Sigmoid colon (tissue), 7 donors: ENCODE measurements at regions of chr2 and their contacts with region 1.

Region 1: DNA sequence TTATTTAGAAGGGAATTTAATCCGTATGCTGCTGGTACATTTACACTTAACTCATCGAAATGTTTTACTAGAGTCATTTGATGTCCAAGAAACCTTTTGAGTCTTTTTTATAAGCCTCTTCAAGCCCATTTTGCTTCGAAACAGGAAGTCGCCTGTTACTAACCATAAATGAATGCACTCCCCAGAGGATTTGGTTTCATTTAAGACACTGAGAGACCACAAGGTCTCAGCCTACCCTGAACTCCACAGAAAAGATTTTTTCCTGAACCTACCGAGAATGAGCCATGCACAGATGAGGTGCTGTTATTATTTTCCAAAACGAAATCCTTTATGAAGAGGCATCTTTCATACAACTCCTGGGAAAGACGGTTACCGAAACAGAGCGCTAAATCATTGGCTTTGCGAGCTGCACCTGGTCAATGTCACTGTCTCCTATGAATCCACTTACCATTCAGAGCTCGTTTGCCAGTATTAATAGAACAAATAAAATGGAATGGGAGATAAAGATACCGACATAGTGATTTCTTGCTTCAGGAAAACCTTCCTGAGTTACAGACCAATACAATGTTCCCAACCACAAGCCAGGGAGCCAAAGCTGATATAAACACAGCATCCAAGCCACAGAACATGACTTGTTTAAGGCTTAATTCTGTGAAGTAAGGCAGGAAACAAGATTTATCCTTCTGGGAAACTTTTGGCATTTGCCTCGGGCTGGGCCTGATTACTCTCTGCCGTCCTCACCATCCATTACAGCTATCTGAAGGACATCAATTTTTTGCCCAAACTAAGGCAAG is 382.1 kb downstream of the OSR1 start:
- DNase-seq: peak; percentile 75
- H3K4me3 ChIP-seq: peak overlapping the region in 3 of 4 donors; percentile 5 to 23 (median 7)
- H3K27ac ChIP-seq: peak overlapping the region; percentile 67 to 81 (median 77)
- H3K4me1 ChIP-seq: peaks cover 0 to 44% (median 37%) of the 10 kb centered on the region in 4 donors
- H3K27me3 ChIP-seq: no peaks in the 10 kb centered on the region
- CTCF ChIP-seq: no peak
- EP300 ChIP-seq: peak; percentile 0 to 75 (median 58)
- POLR2A ChIP-seq: no peak

Region 2: GRCh38 chr2:18749912-18750526 is 226.3 kb before region 1 on chr2:
- intact Hi-C with region 1: loop called (anchors 2 kb)
- DNase-seq: peak; percentile 77
- H3K4me3 ChIP-seq: no peak overlapping the region
- H3K27ac ChIP-seq: no peak overlapping the region
- H3K4me1 ChIP-seq: peaks cover 0 to 11% (median 5%) of the 10 kb centered on the region in 4 donors
- H3K27me3 ChIP-seq: no peaks in the 10 kb centered on the region
- CTCF ChIP-seq: peak; percentile 53 to 84 (median 72)
- EP300 ChIP-seq: no peak
- POLR2A ChIP-seq: no peak

Region 3: DNA sequence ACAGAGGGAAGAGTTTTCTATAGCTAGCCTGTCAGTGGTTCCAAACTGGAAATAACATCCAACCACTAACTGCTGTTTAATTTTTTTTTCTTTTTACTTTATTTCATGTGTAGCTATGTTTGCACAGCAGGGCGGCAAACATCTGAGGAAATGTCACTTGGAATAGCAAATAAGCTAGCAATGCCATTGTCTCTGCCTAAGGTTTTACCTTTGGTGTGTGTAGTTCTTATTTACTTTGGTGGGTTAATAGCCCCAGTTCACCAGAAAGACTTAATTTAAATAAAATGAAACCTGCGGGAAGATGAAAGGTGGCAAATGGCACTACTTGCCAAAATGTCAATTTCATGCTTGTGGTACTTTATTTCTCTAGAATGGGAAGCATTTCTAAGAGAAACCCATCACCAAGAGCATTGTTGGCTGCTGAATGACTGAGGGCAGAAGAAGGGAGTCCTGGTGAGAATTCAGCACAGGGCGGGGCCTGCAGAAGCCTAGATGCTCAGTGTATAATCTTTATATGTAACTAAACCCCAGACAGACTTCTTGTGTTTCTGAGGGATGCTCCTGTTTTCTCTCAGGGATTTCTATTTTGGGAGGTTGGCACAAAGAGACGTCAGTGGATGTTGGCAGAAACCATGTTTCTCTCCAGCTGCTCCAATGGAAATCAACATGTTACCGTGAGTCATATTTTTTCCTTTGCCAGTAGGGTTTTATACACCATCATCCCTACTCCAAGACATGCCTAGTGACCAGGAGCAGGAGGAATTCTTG is 86.6 kb before region 1 on chr2:
- intact Hi-C with region 1: loop called (anchors 1 kb)
- DNase-seq: peak; percentile 70
- H3K4me3 ChIP-seq: no peak overlapping the region
- H3K27ac ChIP-seq: peak overlapping the region; percentile 16 to 82 (median 76)
- H3K4me1 ChIP-seq: peaks cover 2 to 21% (median 18%) of the 10 kb centered on the region in 4 donors
- H3K27me3 ChIP-seq: no peaks in the 10 kb centered on the region
- CTCF ChIP-seq: no peak
- EP300 ChIP-seq: peak; percentile 74 to 91 (median 78)
- POLR2A ChIP-seq: no peak

Region 4: DNA sequence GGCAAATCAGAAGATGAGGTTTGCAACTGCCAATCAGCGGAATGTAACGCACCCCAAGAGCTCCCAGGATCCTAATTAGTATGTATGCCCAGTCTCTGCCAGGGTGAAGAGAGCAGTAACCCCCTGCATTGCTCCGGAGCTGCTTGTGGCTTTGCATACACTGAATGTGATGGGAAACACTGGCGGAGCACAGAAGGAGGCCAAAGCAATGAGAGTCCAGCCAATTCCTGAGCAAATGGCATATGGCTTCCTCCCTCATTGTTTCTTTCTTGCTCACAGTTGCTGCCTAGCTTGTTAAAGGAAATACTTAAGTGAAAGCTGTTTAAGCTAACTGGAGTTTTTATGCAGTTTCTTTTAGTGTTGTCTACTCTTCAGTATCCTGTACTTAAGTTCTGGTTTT is 43.5 kb before region 1 on chr2:
- intact Hi-C with region 1: no loop called
- DNase-seq: no peak
- H3K4me3 ChIP-seq: no peak overlapping the region
- H3K27ac ChIP-seq: no peak overlapping the region
- H3K4me1 ChIP-seq: peaks cover 0 to 18% (median 18%) of the 10 kb centered on the region in 4 donors
- H3K27me3 ChIP-seq: no peaks in the 10 kb centered on the region
- CTCF ChIP-seq: no peak
- EP300 ChIP-seq: no peak
- POLR2A ChIP-seq: no peak

Region 5: GRCh38 chr2:19046986-19047780 is 70.8 kb after region 1 on chr2:
- intact Hi-C with region 1: no loop called
- DNase-seq: no peak
- H3K4me3 ChIP-seq: no peak overlapping the region
- H3K27ac ChIP-seq: peak overlapping the region in 1 of 4 donors; percentile 33
- H3K4me1 ChIP-seq: no peaks in the 10 kb centered on the region
- H3K27me3 ChIP-seq: no peaks in the 10 kb centered on the region
- CTCF ChIP-seq: no peak
- EP300 ChIP-seq: no peak
- POLR2A ChIP-seq: no peak

Region 6: GRCh38 chr2:19347619-19348562 is 371.5 kb after region 1 on chr2:
- intact Hi-C with region 1: loop called (anchors 5 kb)
- DNase-seq: peak; percentile 99
- H3K4me3 ChIP-seq: peak overlapping the region; percentile 62 to 92 (median 78)
- H3K27ac ChIP-seq: peak overlapping the region; percentile 86 to 96 (median 93)
- H3K4me1 ChIP-seq: peaks cover 0 to 27% (median 25%) of the 10 kb centered on the region in 4 donors
- H3K27me3 ChIP-seq: peaks cover 0 to 21% (median 0%) of the 10 kb centered on the region in 3 donors
- CTCF ChIP-seq: no peak
- EP300 ChIP-seq: peak in 1 of 4 donors; percentile 75
- POLR2A ChIP-seq: peak; percentile 97

Region 7: DNA sequence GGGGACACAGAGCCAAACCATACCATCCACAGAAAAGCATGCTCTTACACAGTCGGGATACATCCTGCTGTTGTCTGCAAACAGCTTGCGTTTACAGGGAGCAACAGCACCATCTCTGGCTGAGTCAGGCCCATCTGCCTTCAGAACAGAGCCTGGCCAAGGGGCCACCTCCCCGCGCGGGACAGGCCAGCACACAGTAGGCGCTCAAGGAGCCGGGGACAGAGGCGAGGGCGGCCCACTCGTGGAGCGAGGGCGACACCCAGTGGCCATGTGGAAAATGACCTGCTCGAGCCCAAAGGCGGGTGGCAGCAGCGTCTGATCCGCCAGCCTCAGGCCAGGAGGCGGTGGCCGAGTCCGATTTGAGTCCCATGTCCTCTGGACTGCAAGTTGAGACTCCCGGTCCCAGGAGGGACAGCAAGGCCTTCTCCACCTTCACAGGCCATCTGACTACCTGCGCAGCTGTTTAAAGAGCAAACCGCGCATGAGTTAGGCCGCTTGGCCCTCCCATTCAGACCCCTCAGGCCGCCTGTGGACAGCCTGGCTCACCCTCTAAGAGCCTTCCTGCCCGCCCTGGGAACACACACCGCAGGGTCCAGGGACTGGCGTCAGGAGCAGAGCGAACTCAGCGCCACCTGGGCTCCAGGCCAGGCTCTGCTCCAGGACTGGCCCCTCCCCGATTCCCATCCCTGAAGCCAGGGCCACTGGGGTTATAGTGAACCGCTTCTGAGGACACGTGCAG is 887.1 kb after region 1 on chr2:
- intact Hi-C with region 1: loop called (anchors 10 kb)
- DNase-seq: peak; percentile 82
- H3K4me3 ChIP-seq: peak overlapping the region in 1 of 4 donors; percentile 5
- H3K27ac ChIP-seq: no peak overlapping the region
- H3K4me1 ChIP-seq: peaks cover 0 to 23% (median 9%) of the 10 kb centered on the region in 4 donors
- H3K27me3 ChIP-seq: peaks cover 0 to 8% (median 0%) of the 10 kb centered on the region in 3 donors
- CTCF ChIP-seq: peak; percentile 93 to 98 (median 96)
- EP300 ChIP-seq: no peak
- POLR2A ChIP-seq: no peak